BJ (cell line): ENCODE measurements at regions of chr5 and their contacts with region 1.

Region 1: GRCh38 chr5:132272311-132273210 is 15.1 kb downstream of the PDLIM4 start:
- DNase-seq: no peak
- H3K4me3 ChIP-seq: no peak overlapping the region
- H3K27me3 ChIP-seq: no peaks in the 10 kb centered on the region
- CTCF ChIP-seq: peak; percentile 85

Region 2: DNA sequence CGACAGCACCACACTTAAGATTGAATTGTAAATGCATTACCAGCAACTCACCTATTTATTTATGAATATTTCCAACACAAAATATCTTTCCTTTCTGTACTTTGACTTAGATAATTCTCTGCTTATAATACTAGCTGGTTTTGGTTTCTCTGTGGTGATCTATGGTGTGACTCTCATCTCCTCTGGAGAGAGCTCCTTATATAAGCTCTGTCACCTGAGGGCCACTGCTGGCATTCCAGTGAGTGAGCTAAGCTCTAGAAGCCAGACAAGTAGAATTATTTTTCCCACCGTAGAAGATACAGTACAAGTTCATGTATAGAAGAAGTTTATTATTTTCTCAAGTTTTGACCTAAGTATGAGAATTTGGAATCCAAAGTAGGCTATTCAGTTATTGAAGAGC is 897.2 kb before region 1 on chr5:
- CTCF ChIA-PET with region 1: no interaction called
- POLR2A ChIA-PET with region 1: no interaction called
- DNase-seq: no peak
- H3K4me3 ChIP-seq: no peak overlapping the region
- H3K27me3 ChIP-seq: no peaks in the 10 kb centered on the region
- CTCF ChIP-seq: no peak

Region 3: DNA sequence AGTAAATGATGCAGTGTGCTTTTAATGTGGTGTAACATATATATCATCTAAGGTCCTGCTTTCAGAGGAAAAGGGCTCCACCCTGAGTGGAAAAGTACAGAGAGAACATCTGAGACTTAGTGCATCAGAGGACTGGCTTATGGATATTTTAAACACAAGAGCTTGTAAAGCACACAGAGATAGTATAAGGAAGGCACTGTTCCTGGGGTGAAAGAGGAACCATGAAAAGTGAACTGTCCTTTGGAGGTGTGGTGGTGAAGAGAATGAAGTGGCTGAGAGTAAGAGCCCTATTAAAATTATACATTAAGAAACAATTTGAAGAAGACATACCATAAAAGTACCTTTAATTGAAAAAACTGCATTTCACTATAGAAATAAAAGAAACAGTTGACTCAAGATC is 130.1 kb before region 1 on chr5:
- CTCF ChIA-PET with region 1: no interaction called
- POLR2A ChIA-PET with region 1: no interaction called
- DNase-seq: no peak
- H3K4me3 ChIP-seq: no peak overlapping the region
- H3K27me3 ChIP-seq: peaks cover 2% of the 10 kb centered on the region; the same call in 1 of the 2 replicates
- CTCF ChIP-seq: no peak

Region 4: DNA sequence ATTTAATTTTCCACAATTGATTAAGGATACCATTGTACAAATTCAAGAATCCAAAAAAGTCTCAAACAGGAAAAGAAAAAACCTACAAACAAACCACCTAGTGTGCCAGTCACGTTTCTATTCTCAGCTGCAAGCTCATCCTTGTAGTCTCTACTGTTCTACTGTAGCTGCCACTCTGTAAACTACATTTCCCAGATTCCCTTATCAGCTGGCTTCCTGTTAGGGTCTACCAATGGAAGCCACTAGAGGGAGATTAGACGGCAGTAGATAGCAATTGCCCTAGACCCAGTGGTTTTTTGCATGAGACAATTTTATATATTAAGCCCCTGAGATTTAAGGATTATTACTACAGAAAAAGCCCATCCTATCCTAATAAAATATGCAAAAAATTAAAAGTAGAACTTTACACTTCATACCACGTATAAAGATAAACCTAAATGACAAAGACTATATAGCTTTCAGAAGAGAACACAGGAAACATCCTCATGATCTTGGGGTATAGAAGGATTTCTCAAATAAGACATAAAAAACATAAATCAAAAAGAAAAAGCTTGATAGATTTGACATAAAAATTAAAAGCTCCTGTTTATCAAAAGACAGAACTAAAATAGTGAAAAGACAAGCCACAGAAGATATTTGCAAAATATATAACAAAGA is 82.3 kb before region 1 on chr5:
- CTCF ChIA-PET with region 1: no interaction called
- POLR2A ChIA-PET with region 1: no interaction called
- DNase-seq: peak; percentile 26
- H3K4me3 ChIP-seq: no peak overlapping the region
- H3K27me3 ChIP-seq: no peaks in the 10 kb centered on the region
- CTCF ChIP-seq: peak; percentile 88

Region 5: DNA sequence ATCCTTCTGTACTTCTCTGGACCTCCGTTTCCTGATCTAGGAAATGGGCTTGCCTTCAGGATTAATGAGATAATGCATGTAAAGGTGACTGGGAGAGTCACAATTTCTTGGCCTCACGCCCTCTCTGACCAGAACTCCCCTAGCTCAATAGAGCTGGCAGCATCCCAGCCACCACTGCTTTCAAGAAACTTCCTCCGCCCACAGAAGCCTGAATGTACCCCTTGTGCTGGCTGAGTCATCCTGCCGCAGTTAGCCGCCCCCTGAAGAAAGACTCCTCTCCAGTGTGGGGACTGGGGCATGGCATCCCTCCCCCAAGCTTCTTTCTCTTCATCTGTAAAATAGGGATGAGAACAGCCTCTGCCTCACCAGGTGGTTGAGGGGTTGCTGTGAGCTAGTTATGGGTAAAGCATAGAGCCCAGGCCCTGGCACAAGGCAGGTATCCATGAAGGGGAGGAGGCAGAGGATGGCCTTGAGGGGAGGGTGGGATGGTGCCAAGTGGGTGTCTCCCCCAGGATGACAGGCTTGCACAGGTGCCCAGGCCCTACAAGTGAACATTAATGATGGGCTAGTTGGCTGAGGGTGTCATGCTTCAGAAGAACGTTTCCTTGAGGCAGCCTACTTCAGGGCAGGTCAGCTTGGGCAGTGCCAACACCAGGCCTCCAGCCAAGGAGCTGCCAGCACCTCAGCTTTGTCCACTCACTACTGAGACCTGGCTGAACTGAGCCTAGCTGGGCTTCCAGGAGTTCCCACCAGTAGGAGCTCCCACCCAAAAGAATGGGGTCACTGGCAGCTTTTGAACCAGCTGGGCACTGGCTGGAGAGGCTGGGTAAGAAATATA is 11.6 kb before region 1 on chr5:
- CTCF ChIA-PET with region 1: interaction called, 13 read pairs
- POLR2A ChIA-PET with region 1: no interaction called
- DNase-seq: peak; percentile 46
- H3K4me3 ChIP-seq: no peak overlapping the region
- H3K27me3 ChIP-seq: no peaks in the 10 kb centered on the region
- CTCF ChIP-seq: no peak

Region 6: DNA sequence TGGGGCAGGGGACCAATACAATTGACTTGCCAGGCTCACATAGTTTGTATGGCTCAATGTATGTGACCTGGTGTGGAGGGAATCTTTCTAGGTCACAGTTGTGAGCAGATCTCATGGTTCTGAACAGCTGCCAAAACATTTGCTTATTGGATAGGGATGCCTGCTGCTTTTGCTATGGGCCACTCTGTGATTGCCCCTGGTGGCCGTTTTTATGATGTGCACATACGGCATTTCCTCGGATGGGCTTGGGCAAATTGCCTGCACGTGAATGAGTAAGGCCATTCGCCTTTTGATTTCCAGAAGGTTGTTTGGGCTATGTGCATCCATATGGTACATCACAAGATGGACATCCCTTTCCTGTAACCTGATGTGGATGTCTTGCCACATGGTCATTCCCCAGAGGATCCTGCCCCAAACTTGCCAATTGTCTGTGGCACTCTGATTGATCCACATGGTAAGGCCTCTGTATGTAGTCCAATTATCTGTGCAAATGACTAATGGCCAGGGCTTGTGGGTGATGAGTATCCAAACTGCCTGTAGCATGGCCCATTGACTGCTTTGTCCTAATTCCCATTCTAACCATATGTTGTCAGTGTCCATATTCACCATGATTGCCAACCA is 11.0 kb after region 1 on chr5:
- CTCF ChIA-PET with region 1: interaction called, 19 read pairs
- POLR2A ChIA-PET with region 1: no interaction called
- DNase-seq: no peak
- H3K4me3 ChIP-seq: no peak overlapping the region
- H3K27me3 ChIP-seq: no peaks in the 10 kb centered on the region; the same call in 1 of the 2 replicates
- CTCF ChIP-seq: peak; percentile 56

Region 7: DNA sequence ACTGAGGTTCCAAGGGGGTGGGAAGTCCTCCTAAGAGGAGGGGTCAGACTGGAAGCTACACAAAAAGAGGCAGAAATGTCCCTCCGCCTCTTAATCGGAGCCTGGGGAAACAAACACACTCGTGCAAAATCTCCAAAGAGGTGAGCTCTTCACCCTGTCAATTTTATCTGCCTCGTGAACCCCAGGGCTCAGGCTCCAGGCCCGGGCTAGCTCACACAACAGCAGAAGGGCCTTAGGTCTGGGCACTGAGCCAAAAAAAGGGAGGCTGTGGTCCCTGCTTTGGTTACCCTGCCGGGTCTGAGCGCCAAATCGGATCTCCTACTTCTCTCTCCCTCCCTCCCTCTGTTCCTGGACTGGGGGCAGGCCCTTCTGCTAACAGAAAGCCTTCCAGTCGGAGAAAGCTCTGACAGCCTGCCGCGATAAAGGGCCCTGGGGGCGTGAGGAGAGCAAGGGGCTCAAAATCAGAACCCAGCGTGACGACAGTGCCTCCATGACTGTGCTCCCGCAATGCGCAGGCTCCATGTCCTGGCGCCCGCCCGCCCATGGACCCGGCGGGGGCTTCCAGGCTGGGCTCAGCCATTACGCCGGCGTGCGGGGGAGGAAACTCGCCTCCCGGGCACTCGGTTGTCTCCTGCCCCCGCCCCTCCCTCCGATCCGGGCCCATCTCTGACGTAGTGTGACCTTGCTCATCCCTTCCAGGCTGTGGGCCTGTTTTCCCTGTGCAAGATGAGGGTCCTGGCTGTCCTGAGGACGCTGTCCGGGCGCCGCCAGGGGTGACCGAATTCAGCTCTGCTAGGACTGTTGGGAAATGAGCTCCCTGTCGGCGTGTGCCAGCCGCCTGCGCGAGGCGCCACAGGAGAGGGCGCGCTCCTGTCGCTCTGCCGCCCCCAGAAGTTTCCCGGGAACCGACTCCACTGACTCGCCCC is 20.8 kb after region 1 on chr5:
- CTCF ChIA-PET with region 1: interaction called, 17 read pairs
- POLR2A ChIA-PET with region 1: interaction called, 3 read pairs
- DNase-seq: peak; percentile 31
- H3K4me3 ChIP-seq: peak overlapping the region; percentile 62
- H3K27me3 ChIP-seq: no peaks in the 10 kb centered on the region
- CTCF ChIP-seq: peak; percentile 35; the same call in 1 of the 2 replicates